HAP-1 (cell line): ENCODE measurements at regions of chr9 and their contacts with region 1.

Region 1: GRCh38 chr9:14428781-14429230 is 114.9 kb upstream of the NFIB start:
- DNase-seq: peak; percentile 80 to 91
- H3K4me3 ChIP-seq: no peak overlapping the region
- H3K4me1 ChIP-seq: peaks cover 11% of the 10 kb centered on the region
- H3K27me3 ChIP-seq: no peaks in the 10 kb centered on the region

Region 2: DNA sequence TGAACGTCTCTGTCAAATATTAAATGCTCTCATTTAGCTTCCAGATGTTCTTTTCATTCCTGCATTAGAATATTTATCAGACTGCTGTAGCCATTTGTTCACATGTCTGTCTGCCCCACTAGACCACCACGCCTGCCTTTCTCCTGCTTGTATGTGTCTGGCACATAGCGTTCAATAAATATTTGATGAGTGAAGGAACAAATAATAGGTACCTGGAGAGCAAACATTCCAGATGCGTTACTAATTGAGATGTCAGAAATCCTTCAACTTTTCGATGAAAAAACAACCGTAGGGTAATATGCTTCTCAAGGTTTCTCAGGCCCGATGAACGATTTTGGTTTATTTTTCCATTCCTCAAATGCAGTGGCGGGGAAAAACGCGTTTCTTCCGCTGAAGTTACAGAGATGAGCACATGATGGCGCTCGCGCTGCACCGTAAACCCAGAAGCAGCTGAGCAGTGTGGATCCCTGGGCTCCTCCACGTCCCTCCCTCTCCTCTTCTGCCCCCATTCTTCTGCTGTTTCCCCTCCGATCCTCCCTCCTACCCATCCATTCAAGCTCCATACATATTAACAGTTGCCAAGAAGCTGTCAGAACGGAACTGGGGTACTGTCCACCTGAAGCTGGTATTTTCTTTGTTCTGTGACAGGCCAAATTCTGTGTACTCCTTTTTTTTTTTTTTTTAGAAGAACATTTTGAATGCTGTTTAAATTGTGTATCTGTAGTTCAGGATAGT is 1394.7 kb before region 1 on chr9:
- in situ Hi-C with region 1: loop called (anchors 25 kb)
- DNase-seq: peak; percentile 80 to 81
- H3K4me3 ChIP-seq: no peak overlapping the region
- H3K4me1 ChIP-seq: no peaks in the 10 kb centered on the region
- H3K27me3 ChIP-seq: no peaks in the 10 kb centered on the region

Region 3: GRCh38 chr9:13410566-13411031 is 1018.2 kb before region 1 on chr9:
- in situ Hi-C with region 1: loop called (anchors 25 kb)
- DNase-seq: no peak
- H3K4me3 ChIP-seq: no peak overlapping the region
- H3K4me1 ChIP-seq: no peaks in the 10 kb centered on the region
- H3K27me3 ChIP-seq: no peaks in the 10 kb centered on the region

Region 4: GRCh38 chr9:14366076-14366475 is 62.7 kb before region 1 on chr9:
- in situ Hi-C with region 1: no loop called
- DNase-seq: no peak
- H3K4me3 ChIP-seq: no peak overlapping the region
- H3K4me1 ChIP-seq: peaks cover 4% of the 10 kb centered on the region; the same call in 1 of the 2 replicates
- H3K27me3 ChIP-seq: no peaks in the 10 kb centered on the region

Region 5: GRCh38 chr9:15116130-15116580 is 687.3 kb after region 1 on chr9:
- in situ Hi-C with region 1: no loop called
- DNase-seq: no peak
- H3K4me3 ChIP-seq: no peak overlapping the region
- H3K4me1 ChIP-seq: no peaks in the 10 kb centered on the region
- H3K27me3 ChIP-seq: no peaks in the 10 kb centered on the region